ENCODE measurements at regions of chr4 and their contacts with region 1.

Region 1: GRCh38 chr4:124322234-124323065 is 390.1 kb downstream of the ANKRD50 start:
- DNase-seq: no peak
- ATAC-seq: peak; percentile 20; the same call in 1 of the 3 replicates
- H3K4me3 ChIP-seq: no peak overlapping the region
- H3K27ac ChIP-seq: no peak overlapping the region
- H3K4me1 ChIP-seq: no peaks in the 10 kb centered on the region
- H3K27me3 ChIP-seq: no peaks in the 10 kb centered on the region
- CTCF ChIP-seq: peak in 2 of 3 experiments; percentile 51 to 53; a peak in 4 of 6 replicates
- EP300 ChIP-seq: no peak
- POLR2A ChIP-seq: no peak
- RAD21 ChIP-seq: peak; percentile 44

Region 2: DNA sequence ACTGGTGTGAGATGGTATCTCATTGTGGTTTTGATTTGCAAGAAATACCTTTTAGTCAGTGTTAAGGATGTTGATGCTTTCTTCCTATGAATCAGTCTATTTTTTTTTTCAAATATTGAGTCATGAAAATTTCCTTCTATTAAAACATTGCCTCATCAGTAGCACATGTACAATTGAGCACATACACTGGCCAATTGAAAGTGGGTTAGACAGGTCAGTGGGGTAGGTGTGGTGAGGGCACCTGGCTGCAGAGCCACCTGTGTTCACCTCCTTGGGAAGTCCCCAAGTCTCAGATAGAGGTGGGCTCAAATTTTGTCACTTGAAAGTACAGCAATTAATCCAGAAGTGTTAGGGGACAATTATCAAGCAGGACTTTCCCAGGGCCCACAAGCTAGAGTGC is 682.2 kb before region 1 on chr4:
- CTCF ChIA-PET with region 1: no interaction called
- POLR2A ChIA-PET with region 1: no interaction called
- RAD21 ChIA-PET with region 1: no interaction called
- SMC1A ChIA-PET with region 1: no interaction called
- in situ Hi-C with region 1: no loop called
- intact Hi-C with region 1: no loop called
- DNase-seq: no peak
- ATAC-seq: peak; percentile 81
- H3K4me3 ChIP-seq: no peak overlapping the region
- H3K27ac ChIP-seq: no peak overlapping the region
- H3K4me1 ChIP-seq: no peaks in the 10 kb centered on the region
- H3K27me3 ChIP-seq: no peaks in the 10 kb centered on the region
- CTCF ChIP-seq: no peak
- EP300 ChIP-seq: no peak
- POLR2A ChIP-seq: no peak
- RAD21 ChIP-seq: no peak

Region 3: DNA sequence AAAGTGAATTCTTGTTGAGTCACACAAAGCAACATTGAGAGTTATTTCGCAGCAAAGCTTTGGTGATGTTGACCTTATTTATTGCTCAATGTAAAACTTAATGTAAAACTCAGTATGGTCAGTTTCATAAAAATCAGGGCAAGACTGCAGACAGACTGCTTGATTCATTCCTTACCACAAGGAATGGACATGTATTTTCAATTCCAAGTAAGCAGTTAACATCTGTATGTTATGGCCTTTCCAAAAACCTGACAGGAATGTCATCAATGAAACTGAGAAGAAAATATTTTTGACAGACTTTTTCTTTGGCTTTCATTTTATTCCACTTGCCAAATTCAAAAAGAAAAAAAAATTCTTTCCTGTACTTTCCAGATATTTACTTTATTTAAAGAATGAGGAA is 98.2 kb before region 1 on chr4:
- CTCF ChIA-PET with region 1: no interaction called
- POLR2A ChIA-PET with region 1: no interaction called
- RAD21 ChIA-PET with region 1: no interaction called
- SMC1A ChIA-PET with region 1: no interaction called
- in situ Hi-C with region 1: no loop called
- intact Hi-C with region 1: no loop called
- DNase-seq: no peak
- ATAC-seq: no peak
- H3K4me3 ChIP-seq: no peak overlapping the region
- H3K27ac ChIP-seq: no peak overlapping the region
- H3K4me1 ChIP-seq: no peaks in the 10 kb centered on the region
- H3K27me3 ChIP-seq: no peaks in the 10 kb centered on the region
- CTCF ChIP-seq: no peak
- EP300 ChIP-seq: no peak
- POLR2A ChIP-seq: no peak
- RAD21 ChIP-seq: no peak

Region 4: GRCh38 chr4:124334119-124334518 is 11.7 kb after region 1 on chr4:
- CTCF ChIA-PET with region 1: interaction called, 14 read pairs
- POLR2A ChIA-PET with region 1: no interaction called
- RAD21 ChIA-PET with region 1: no interaction called
- SMC1A ChIA-PET with region 1: interaction called, 3 read pairs
- in situ Hi-C with region 1: no loop called
- intact Hi-C with region 1: no loop called
- DNase-seq: no peak
- ATAC-seq: peak; percentile 62
- H3K4me3 ChIP-seq: no peak overlapping the region
- H3K27ac ChIP-seq: no peak overlapping the region
- H3K4me1 ChIP-seq: no peaks in the 10 kb centered on the region
- H3K27me3 ChIP-seq: no peaks in the 10 kb centered on the region; a peak in 1 of 4 replicates
- CTCF ChIP-seq: peak; percentile 25 to 39 (median 37); a peak in 3 of 6 replicates
- EP300 ChIP-seq: no peak
- POLR2A ChIP-seq: no peak
- RAD21 ChIP-seq: peak; percentile 55

Region 5: DNA sequence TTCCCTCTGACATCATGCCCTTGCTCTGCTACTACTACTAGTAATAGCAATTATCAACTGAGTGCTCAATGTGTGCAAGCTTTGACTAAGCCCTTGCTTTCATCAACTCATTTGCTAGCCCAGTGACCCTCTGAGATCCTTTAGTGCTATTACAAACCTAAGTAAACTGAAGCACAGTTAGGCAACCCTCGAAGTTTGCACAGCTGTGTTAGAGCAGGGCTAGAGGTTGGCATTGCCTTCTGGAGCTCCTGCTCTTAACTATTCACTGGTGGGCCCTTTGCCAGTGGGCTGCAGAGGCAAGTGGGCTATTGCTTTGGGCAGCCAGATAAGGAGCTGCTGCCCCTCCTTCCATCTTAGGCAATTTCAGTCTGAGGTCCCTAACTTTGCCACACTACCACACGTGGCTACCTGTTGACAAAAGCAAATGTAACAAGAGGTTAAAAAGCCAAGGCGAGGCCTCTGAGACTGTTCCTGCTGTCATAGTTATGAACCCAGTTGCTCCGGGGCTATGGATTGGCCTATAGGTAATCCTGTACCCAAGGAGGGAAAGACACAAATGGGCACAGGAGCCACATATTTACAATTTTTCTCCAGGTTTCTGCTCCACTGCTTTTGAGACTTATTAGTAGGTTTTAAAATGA is 431.6 kb after region 1 on chr4:
- CTCF ChIA-PET with region 1: no interaction called
- POLR2A ChIA-PET with region 1: no interaction called
- RAD21 ChIA-PET with region 1: no interaction called
- SMC1A ChIA-PET with region 1: no interaction called
- in situ Hi-C with region 1: no loop called
- intact Hi-C with region 1: no loop called
- DNase-seq: no peak
- ATAC-seq: no peak
- H3K4me3 ChIP-seq: no peak overlapping the region
- H3K27ac ChIP-seq: no peak overlapping the region
- H3K4me1 ChIP-seq: no peaks in the 10 kb centered on the region
- H3K27me3 ChIP-seq: no peaks in the 10 kb centered on the region
- CTCF ChIP-seq: no peak
- EP300 ChIP-seq: no peak
- POLR2A ChIP-seq: no peak
- RAD21 ChIP-seq: no peak